ENCODE measurements at regions of chr1 and their contacts with region 1.

Region 1: GRCh38 chr1:235253219-235253962 is 74.6 kb downstream of the ARID4B start:
- DNase-seq: peak; percentile 59

Region 2: DNA sequence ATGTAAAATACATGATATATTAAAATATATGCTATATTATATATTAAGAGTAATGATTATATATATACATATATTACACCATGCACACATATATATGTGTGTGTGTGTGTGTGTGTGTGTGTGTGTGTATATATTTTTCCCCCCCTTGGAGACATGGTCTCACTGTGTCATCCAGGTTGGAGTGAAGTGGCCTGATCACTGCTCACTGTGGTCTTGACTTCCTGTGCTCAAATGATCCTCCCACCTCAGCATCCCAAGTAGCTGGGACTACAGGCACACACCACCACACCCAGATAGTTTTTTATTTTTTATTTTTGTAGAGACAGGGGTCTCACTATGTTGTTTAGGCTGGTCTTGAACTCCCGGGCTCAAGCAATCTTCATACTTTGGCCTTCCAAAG is 37.9 kb before region 1 on chr1:
- CTCF ChIA-PET with region 1: no interaction called
- POLR2A ChIA-PET with region 1: no interaction called
- DNase-seq: no peak

Region 3: DNA sequence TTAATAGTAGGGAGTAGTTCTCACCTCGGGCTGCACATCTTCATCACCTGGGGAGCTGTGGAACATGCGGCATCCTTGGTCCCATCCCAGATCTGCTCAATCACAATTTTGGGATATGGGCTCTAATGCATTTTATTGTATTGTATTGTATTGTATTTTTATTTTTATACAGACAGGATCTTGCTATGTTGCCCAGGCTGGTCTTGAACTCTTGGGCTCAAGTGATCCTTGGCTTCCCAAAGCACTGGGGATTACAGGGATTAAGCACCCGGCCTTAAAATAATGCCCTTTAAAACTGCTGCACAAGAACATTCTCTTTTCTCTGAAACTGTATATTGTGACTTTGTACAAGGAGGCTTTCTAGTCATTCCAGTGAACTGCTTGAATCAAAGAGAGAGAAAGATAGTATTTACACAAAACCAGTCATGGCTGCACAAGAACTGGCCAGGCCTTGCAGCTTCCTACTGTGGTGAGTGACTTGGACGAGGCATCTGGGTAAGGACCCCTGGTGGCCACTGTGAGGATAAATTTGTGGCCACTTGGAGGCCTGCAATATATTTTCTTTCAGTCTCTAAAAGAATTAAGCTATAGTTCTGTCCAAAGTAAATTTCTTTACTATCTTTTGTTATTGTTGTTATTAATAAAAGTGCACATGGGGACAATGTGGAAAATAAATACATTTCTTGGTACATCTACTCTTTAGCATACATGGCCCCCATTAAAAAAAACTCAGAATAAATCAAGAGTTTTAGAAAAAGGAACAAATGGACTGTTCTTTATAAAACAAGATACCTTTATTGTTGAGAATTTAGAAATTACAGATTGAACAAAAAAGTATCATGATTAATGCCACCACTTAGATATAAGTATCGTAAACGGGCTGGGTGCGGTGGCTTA is 161.9 kb after region 1 on chr1:
- CTCF ChIA-PET with region 1: interaction called, 12 read pairs
- POLR2A ChIA-PET with region 1: no interaction called
- DNase-seq: peak; percentile 82